ENCODE measurements at regions of chr6 and their contacts with region 1.

Region 1: GRCh38 chr6:119078376-119079282 is at the start of gene FAM184A:
- DNase-seq: peak; percentile 74 to 86 (median 82)
- ATAC-seq: peak; percentile 79
- H3K4me3 ChIP-seq: peak within 1 kb of the TSS; percentile 77
- H3K4me3 Mint-ChIP-seq: peak within 1 kb of the TSS; percentile 75 to 97 (median 94)
- H3K27ac ChIP-seq: peak within 1 kb of the TSS; percentile 74
- H3K27ac Mint-ChIP-seq: peak within 1 kb of the TSS; percentile 66 to 97 (median 95)
- H3K4me1 ChIP-seq: peaks cover 5 to 25% of the 10 kb centered on the region in 2 donors
- H3K4me1 Mint-ChIP-seq: peaks cover 14 to 50% (median 39%) of the 10 kb centered on the region in 7 donors
- H3K27me3 ChIP-seq: no peaks in the 10 kb centered on the region
- H3K27me3 Mint-ChIP-seq: peaks cover 0 to 9% (median 0%) of the 10 kb centered on the region in 5 donors
- total RNA-seq, gene FAM184A: 5.3 to 9.8 (median 7.9) TPM

Region 2: DNA sequence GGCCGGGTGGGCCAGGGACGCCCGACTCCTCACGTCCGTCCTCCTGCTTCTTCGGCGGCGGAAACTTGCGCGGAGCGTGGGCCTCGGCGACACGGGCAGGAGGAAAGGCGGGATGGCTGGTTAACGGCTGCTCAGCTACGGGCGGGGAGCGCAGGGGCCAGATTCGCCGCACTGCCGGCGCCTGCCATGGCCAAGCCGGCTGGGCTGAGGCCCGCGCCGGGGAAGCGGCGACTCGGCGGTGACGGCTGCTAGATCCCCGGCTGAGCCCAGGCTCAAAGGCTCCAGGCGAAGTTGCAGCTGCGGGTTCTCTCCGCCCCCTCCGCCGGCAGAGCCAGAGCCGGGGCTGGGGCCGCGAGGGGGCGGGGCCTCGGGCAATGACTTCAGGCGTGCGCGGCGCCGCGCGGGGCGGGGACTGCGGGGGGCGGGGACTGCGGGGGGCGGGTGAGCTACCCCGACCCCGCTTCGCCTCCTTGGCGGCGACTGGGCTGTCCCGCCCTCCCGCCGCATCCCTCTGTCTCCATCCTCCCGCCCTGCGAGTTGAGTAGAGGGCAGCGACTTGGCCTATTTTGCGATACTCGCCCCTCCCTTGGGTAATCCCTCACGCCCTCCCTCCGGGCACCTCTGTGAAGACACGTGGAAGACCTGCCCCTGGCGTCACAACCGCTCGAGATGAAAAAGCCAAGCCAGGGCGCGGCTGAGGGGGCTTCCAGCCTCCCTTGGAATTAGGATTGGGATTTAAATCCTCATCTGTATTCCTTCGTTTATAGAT is 427.2 kb before region 1 on chr6 and contains the start of gene CEP85L:
- CTCF ChIA-PET with region 1: no interaction called
- POLR2A ChIA-PET with region 1: no interaction called
- intact Hi-C with region 1: loop called (anchors 5 to 10 kb)
- DNase-seq: peak; percentile 84 to 91 (median 89)
- ATAC-seq: peak; percentile 96
- H3K4me3 ChIP-seq: peak within 1 kb of the TSS; percentile 66
- H3K4me3 Mint-ChIP-seq: peak within 1 kb of the TSS; percentile 91 to 97 (median 94)
- H3K27ac ChIP-seq: peak within 1 kb of the TSS; percentile 87
- H3K27ac Mint-ChIP-seq: peak within 1 kb of the TSS; percentile 88 to 99 (median 94)
- H3K4me1 ChIP-seq: peaks cover 32 to 40% of the 10 kb centered on the region in 2 donors
- H3K4me1 Mint-ChIP-seq: peaks cover 33 to 73% (median 59%) of the 10 kb centered on the region in 7 donors
- H3K27me3 ChIP-seq: no peaks in the 10 kb centered on the region
- H3K27me3 Mint-ChIP-seq: no peaks in the 10 kb centered on the region
- total RNA-seq, gene CEP85L: 51.1 to 89.1 (median 78.6) TPM

Region 3: GRCh38 chr6:118843685-118844390 is 234.8 kb before region 1 on chr6:
- CTCF ChIA-PET with region 1: no interaction called
- POLR2A ChIA-PET with region 1: no interaction called
- intact Hi-C with region 1: no loop called
- DNase-seq: no peak
- ATAC-seq: no peak
- H3K4me3 ChIP-seq: no peak overlapping the region
- H3K4me3 Mint-ChIP-seq: peak overlapping the region in 1 of 10 donors; percentile 4
- H3K27ac ChIP-seq: no peak overlapping the region
- H3K27ac Mint-ChIP-seq: peak overlapping the region in 1 of 9 donors; percentile 24
- H3K4me1 ChIP-seq: no peaks in the 10 kb centered on the region
- H3K4me1 Mint-ChIP-seq: peaks cover 7 to 20% (median 14%) of the 10 kb centered on the region in 7 donors
- H3K27me3 ChIP-seq: no peaks in the 10 kb centered on the region
- H3K27me3 Mint-ChIP-seq: no peaks in the 10 kb centered on the region

Region 4: DNA sequence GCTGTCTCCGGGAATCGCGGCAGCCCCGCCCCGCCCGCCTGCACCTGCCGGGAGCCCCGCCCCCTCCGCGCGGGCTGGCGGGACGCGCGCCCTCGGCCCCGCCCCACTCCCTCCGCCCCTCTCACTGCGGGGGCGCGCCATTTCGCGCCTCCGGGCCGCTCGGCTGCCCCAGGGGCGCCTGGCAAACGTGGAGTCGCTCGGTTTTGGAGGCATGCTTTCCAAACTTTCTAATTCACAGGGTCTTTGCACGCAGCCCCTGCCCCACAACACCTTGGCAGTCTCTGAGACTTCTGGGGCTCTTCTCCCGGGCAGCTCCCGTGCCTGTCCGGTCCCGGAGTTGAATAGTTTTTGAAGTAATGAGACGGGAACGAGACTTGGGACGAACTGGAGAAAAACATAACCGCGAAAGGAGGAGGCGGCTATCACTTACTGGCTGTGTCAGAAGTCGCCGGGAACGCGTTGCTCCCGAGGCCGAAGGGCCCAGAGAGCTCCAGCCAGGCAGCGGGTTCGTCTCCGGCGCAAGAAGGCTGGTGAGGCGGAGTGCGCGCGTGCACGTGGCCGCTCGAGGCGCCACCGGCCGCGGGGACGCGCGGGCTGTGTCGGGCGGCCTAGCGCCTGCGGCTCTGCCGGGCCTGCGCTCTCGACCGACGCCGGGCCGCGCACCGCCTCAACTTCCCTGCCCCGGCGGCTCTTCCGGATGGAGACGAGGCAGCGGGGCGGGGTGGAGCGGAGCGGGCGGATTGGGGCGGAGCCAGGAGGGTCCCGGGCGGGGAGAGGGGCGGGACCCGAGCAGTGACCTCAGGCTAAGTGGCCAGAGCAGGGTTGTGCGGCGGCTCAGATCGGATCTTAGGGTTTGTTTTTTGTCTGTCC is 143.9 kb before region 1 on chr6 and contains the start of gene MCM9:
- CTCF ChIA-PET with region 1: no interaction called
- POLR2A ChIA-PET with region 1: interaction called, 11 read pairs
- intact Hi-C with region 1: loop called (anchors 1 kb)
- DNase-seq: peak; percentile 77 to 93 (median 86)
- ATAC-seq: peak; percentile 92
- H3K4me3 ChIP-seq: peak within 1 kb of the TSS; percentile 98
- H3K4me3 Mint-ChIP-seq: peak within 1 kb of the TSS; percentile 86 to 96 (median 91)
- H3K27ac ChIP-seq: peak within 1 kb of the TSS; percentile 95
- H3K27ac Mint-ChIP-seq: peak within 1 kb of the TSS; percentile 86 to 95 (median 93)
- H3K4me1 ChIP-seq: peaks cover 4 to 8% of the 10 kb centered on the region in 2 donors
- H3K4me1 Mint-ChIP-seq: peaks cover 22 to 47% (median 41%) of the 10 kb centered on the region in 7 donors
- H3K27me3 ChIP-seq: no peaks in the 10 kb centered on the region
- H3K27me3 Mint-ChIP-seq: no peaks in the 10 kb centered on the region
- total RNA-seq, gene MCM9: 21.8 to 33.7 (median 31.1) TPM

Region 5: GRCh38 chr6:119034827-119035458 is 43.7 kb before region 1 on chr6:
- CTCF ChIA-PET with region 1: no interaction called
- POLR2A ChIA-PET with region 1: no interaction called
- intact Hi-C with region 1: loop called in 1 of 2 experiments (anchors 5 kb)
- DNase-seq: no peak
- ATAC-seq: no peak
- H3K4me3 ChIP-seq: no peak overlapping the region
- H3K4me3 Mint-ChIP-seq: no peak overlapping the region
- H3K27ac ChIP-seq: no peak overlapping the region
- H3K27ac Mint-ChIP-seq: no peak overlapping the region
- H3K4me1 ChIP-seq: no peaks in the 10 kb centered on the region
- H3K4me1 Mint-ChIP-seq: peaks cover 0 to 15% (median 0%) of the 10 kb centered on the region in 7 donors
- H3K27me3 ChIP-seq: no peaks in the 10 kb centered on the region
- H3K27me3 Mint-ChIP-seq: peaks cover 0 to 3% (median 0%) of the 10 kb centered on the region in 5 donors

Region 6: GRCh38 chr6:119096721-119097565 is 18.3 kb after region 1 on chr6:
- CTCF ChIA-PET with region 1: no interaction called
- POLR2A ChIA-PET with region 1: interaction called, 3 read pairs
- intact Hi-C with region 1: loop called in 1 of 2 experiments (anchors 2 kb)
- DNase-seq: peak in 2 of 9 donors; percentile 10 to 25
- ATAC-seq: peak; percentile 16
- H3K4me3 ChIP-seq: no peak overlapping the region
- H3K4me3 Mint-ChIP-seq: peak overlapping the region in 8 of 10 donors; percentile 3 to 75 (median 64)
- H3K27ac ChIP-seq: peak overlapping the region; percentile 54
- H3K27ac Mint-ChIP-seq: peak overlapping the region in 8 of 9 donors; percentile 57 to 94 (median 87)
- H3K4me1 ChIP-seq: peaks cover 0 to 8% of the 10 kb centered on the region in 2 donors
- H3K4me1 Mint-ChIP-seq: peaks cover 6 to 31% (median 25%) of the 10 kb centered on the region in 7 donors
- H3K27me3 ChIP-seq: no peaks in the 10 kb centered on the region
- H3K27me3 Mint-ChIP-seq: peaks cover 0 to 2% (median 0%) of the 10 kb centered on the region in 5 donors

Region 7: DNA sequence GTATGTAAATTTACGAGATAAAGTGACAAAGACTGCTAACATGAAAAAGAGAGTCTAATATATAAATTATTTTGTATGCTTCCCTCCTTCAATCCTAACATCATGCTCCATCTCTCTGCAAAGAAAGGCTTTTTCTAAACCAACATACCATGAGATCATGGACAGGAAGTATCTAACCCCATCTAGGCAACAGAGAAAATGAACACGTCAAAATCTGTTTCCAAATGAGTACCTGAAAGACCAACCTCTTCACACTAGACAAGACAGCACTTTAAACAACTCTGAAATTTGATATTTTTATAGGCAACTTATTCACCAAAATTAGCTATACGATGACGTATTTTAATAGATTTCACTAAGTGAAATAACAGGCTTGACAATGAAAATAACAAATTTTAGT is 216.4 kb after region 1 on chr6:
- CTCF ChIA-PET with region 1: no interaction called
- POLR2A ChIA-PET with region 1: no interaction called
- intact Hi-C with region 1: no loop called
- DNase-seq: no peak
- ATAC-seq: no peak
- H3K4me3 ChIP-seq: no peak overlapping the region
- H3K4me3 Mint-ChIP-seq: peak overlapping the region in 1 of 10 donors; percentile 2
- H3K27ac ChIP-seq: no peak overlapping the region
- H3K27ac Mint-ChIP-seq: peak overlapping the region in 1 of 9 donors; percentile 54
- H3K4me1 ChIP-seq: no peaks in the 10 kb centered on the region
- H3K4me1 Mint-ChIP-seq: peaks cover 0 to 32% (median 7%) of the 10 kb centered on the region in 7 donors
- H3K27me3 ChIP-seq: no peaks in the 10 kb centered on the region
- H3K27me3 Mint-ChIP-seq: no peaks in the 10 kb centered on the region

Measured in naive thymus-derived CD4-positive, alpha-beta T cell (primary cell).